Colonic mucosa (tissue), 4 donors: ENCODE measurements at regions of chr11 and their contacts with region 1.

Region 1: DNA sequence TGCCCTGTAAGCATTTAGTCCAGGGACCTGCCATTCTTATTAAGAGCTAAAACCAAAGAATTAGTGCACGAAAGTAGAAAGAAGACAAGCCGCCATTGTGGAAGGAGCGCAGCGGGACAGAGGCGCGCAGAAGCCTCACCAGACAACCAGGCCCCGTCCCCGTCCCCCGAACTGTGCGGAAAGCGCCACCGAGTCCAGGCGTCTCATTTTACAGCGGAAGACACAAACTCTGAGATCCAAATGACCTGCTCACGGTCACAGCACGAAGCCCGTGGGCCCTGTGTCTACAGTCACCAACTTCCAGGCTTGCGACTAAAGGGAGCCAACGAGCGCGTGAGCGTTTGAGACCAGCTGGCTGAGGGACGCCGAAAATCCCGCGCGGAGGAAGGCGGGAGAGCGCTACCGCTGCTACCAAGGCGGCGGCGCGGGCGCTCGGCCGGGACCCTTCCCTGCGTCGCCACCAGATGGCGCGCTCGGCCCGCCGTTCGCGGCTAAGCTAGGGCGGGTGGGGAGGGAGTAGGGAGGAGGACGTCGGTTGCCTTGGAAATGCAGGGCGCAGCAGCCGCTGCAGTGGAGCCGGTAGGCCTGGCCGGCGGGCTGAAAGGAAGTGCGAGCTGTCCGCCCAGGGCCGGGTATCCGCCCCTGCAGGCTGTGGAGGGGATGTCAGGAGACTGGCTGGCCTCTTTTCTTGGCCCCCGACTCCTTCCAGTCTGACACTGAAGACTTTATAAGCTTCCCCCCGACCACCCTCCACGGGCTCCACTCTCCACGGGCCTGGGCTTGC is 434 bp upstream of the CCDC83 start:
- DNase-seq: peak; percentile 91
- H3K4me3 ChIP-seq: peak overlapping the region; percentile 44
- H3K27ac ChIP-seq: peak overlapping the region; percentile 71
- H3K4me1 ChIP-seq: no peaks in the 10 kb centered on the region
- H3K27me3 ChIP-seq: no peaks in the 10 kb centered on the region
- CTCF ChIP-seq: peak; percentile 93

Region 2: GRCh38 chr11:84224042-84224441 is 1630.7 kb before region 1 on chr11:
- intact Hi-C with region 1: no loop called
- DNase-seq: no peak
- H3K4me3 ChIP-seq: no peak overlapping the region
- H3K27ac ChIP-seq: no peak overlapping the region
- H3K4me1 ChIP-seq: no peaks in the 10 kb centered on the region
- H3K27me3 ChIP-seq: no peaks in the 10 kb centered on the region
- CTCF ChIP-seq: no peak

Region 3: GRCh38 chr11:85694386-85694980 is 160.3 kb before region 1 on chr11:
- intact Hi-C with region 1: loop called (anchors 10 kb)
- DNase-seq: no peak
- H3K4me3 ChIP-seq: no peak overlapping the region
- H3K27ac ChIP-seq: no peak overlapping the region
- H3K4me1 ChIP-seq: no peaks in the 10 kb centered on the region
- H3K27me3 ChIP-seq: no peaks in the 10 kb centered on the region
- CTCF ChIP-seq: peak; percentile 34

Region 4: GRCh38 chr11:85742873-85743275 is 111.9 kb before region 1 on chr11:
- intact Hi-C with region 1: no loop called
- DNase-seq: peak; percentile 34
- H3K4me3 ChIP-seq: no peak overlapping the region
- H3K27ac ChIP-seq: peak overlapping the region; percentile 81
- H3K4me1 ChIP-seq: peaks cover 16% of the 10 kb centered on the region
- H3K27me3 ChIP-seq: no peaks in the 10 kb centered on the region
- CTCF ChIP-seq: no peak

Region 5: GRCh38 chr11:86124834-86125233 is 270.1 kb after region 1 on chr11:
- intact Hi-C with region 1: no loop called
- DNase-seq: no peak
- H3K4me3 ChIP-seq: no peak overlapping the region
- H3K27ac ChIP-seq: no peak overlapping the region
- H3K4me1 ChIP-seq: no peaks in the 10 kb centered on the region
- H3K27me3 ChIP-seq: peaks cover 8% of the 10 kb centered on the region
- CTCF ChIP-seq: no peak

Region 6: DNA sequence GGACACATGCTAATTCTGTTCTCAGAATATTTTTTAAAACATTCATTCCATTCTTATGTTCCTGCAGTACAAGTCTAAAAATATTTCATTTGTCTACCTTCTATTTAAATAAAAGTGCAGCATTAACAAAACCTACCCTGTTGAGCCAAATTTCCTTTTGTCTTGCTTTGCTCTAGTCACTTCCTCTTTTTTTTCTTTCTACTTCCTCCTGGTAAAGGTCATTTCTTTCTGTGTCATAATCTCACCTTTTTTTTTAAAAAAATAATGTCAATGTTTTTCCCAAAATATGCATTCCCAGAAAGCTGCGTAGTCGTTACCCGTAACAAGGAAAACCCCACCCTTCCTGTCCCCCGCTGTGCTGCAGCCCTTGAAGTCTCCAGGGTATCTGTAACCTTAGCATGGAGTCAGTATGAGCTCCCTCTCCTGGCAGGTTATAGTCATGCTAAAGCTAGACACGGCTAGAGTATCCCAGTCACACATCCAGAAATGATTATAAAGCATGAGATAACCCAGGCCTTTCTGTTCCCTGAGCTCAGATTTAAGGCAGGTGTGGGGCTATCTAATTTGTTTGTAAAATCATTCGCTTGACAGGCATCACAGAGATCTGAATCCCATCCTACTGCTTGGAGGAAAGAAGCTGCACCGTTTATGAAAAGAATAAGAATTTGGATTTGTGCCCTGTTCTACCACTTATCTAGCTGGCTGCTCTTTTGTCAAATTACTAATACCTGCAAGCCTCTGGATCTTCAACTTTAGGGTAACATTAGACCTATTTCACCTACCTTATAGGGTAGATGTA is 338.7 kb after region 1 on chr11:
- intact Hi-C with region 1: loop called (anchors 10 kb)
- DNase-seq: peak; percentile 82
- H3K4me3 ChIP-seq: no peak overlapping the region
- H3K27ac ChIP-seq: peak overlapping the region; percentile 41
- H3K4me1 ChIP-seq: no peaks in the 10 kb centered on the region
- H3K27me3 ChIP-seq: no peaks in the 10 kb centered on the region
- CTCF ChIP-seq: peak; percentile 59

Region 7: DNA sequence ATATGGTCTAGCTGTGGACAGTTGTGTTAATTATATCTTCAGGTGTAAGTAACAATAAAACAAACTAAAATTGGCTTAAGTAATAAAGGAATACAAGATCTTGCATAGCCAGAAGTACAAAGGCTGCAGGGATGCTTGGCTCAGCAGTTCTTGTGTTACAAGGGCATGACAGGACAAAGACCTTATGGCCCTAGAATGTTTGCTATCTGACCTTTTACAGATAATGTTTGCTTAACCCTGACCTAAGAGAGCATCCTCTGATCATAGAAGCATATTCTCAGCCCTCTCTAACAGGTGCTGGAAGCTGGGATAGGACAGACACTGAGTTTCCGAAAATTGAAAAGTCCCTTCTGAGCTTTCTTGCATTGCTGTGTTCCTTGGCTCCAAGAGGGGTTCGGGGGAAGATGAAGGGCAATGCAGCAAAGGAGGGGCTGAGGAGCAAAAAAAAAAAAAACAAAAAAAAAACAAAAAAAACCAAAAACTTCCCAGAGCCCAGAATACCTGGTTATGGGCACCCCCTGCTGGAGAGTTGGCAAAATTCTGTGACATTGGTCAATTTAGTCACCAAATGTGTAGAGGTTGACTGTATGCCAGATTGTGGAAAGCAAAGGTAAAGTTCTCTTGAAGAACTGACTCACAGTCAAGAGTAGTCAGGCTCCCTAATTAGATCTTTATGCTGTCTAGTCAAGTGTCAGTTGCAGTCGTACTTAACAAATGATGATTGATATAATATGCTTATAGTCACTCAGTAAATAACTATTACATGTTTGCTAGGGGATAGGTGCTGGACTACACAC is 436.9 kb after region 1 on chr11:
- intact Hi-C with region 1: loop called (anchors 10 kb)
- DNase-seq: peak; percentile 57
- H3K4me3 ChIP-seq: no peak overlapping the region
- H3K27ac ChIP-seq: no peak overlapping the region
- H3K4me1 ChIP-seq: no peaks in the 10 kb centered on the region
- H3K27me3 ChIP-seq: no peaks in the 10 kb centered on the region
- CTCF ChIP-seq: peak; percentile 69